Mammary epithelial cell (primary cell): ENCODE measurements at regions of chrX and their contacts with region 1.

Region 1: GRCh38 chrX:45849253-45849862 is 648.7 kb upstream of the DIPK2B start:
- DNase-seq: peak; percentile 84
- H3K4me3 ChIP-seq: peak overlapping the region; percentile 34 to 78 (median 77)
- H3K27ac ChIP-seq: peak overlapping the region; percentile 56
- H3K4me1 ChIP-seq: peaks cover 32% of the 10 kb centered on the region
- H3K27me3 ChIP-seq: no peaks in the 10 kb centered on the region
- CTCF ChIP-seq: peak; percentile 36 to 61

Region 2: DNA sequence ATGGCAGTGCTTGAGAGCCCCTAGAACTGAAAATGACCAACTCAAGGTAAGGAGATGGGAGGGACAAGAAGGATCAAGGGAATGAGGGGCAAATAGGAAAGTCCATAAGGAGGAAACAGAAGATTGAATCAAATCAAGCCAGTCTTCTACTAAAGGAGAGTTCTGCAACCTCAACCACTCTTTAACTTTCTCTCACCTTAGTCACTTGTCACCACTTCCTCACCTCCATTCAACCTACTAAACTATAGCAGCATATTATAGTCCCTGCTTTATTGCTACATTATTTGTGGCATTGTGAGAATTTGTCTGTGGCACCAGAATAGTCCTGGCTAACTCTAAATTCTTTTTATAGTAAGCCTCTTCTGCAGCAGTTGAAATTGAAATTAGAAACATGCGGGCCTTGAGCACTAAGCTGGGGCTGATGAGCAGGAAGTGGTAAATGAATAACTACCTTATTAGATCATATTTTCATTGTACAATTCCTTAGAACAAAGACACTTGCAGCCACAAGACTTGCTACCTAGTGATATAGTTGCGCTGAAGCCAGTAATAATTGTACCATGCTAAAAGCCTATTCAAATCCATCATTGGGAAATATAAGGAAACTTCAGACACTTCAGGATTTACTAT is 359.0 kb after region 1 on chrX:
- CTCF ChIA-PET with region 1: no interaction called
- dilution Hi-C with region 1: no loop called
- in situ Hi-C with region 1: no loop called
- intact Hi-C with region 1: loop called (anchors 2 kb)
- DNase-seq: peak; percentile 65
- H3K4me3 ChIP-seq: no peak overlapping the region
- H3K27ac ChIP-seq: peak overlapping the region; percentile 50
- H3K4me1 ChIP-seq: peaks cover 41% of the 10 kb centered on the region
- H3K27me3 ChIP-seq: no peaks in the 10 kb centered on the region
- CTCF ChIP-seq: no peak

Region 3: DNA sequence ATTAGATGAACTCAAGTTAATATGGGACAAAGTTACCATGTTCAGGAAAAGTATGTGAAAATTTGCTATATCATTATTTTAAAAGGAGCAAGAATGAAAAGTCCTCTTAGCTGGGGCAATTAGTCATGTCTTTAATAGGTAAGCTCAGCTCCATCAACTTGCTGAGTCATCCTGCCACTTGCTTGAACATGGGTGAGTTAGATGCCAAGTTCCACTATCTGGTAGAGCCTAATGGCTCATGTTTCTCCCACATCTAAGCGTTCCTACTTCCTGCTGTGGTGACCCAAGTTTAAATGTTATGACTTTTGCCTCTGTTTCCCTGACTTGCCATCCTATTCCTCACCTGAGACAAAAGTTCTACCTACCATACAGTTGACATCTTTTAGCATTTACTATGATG is 419.1 kb after region 1 on chrX:
- CTCF ChIA-PET with region 1: no interaction called
- dilution Hi-C with region 1: no loop called
- in situ Hi-C with region 1: loop called in 1 of 2 experiments (anchors 25 kb)
- intact Hi-C with region 1: loop called (anchors 5 kb)
- DNase-seq: peak; percentile 85
- H3K4me3 ChIP-seq: no peak overlapping the region
- H3K27ac ChIP-seq: peak overlapping the region; percentile 47
- H3K4me1 ChIP-seq: peaks cover 26% of the 10 kb centered on the region
- H3K27me3 ChIP-seq: no peaks in the 10 kb centered on the region
- CTCF ChIP-seq: no peak

Region 4: GRCh38 chrX:46325312-46325877 is 476.0 kb after region 1 on chrX:
- CTCF ChIA-PET with region 1: no interaction called
- dilution Hi-C with region 1: no loop called
- in situ Hi-C with region 1: no loop called
- intact Hi-C with region 1: loop called (anchors 2 kb)
- DNase-seq: peak; percentile 92
- H3K4me3 ChIP-seq: no peak overlapping the region
- H3K27ac ChIP-seq: peak overlapping the region; percentile 98
- H3K4me1 ChIP-seq: peaks cover 42% of the 10 kb centered on the region
- H3K27me3 ChIP-seq: no peaks in the 10 kb centered on the region
- CTCF ChIP-seq: no peak

Region 5: GRCh38 chrX:46376246-46376885 is 527.0 kb after region 1 on chrX:
- CTCF ChIA-PET with region 1: no interaction called
- dilution Hi-C with region 1: no loop called
- in situ Hi-C with region 1: loop called (anchors 25 kb)
- intact Hi-C with region 1: loop called (anchors 1 kb)
- DNase-seq: peak; percentile 61
- H3K4me3 ChIP-seq: no peak overlapping the region
- H3K27ac ChIP-seq: peak overlapping the region; percentile 7
- H3K4me1 ChIP-seq: peaks cover 20% of the 10 kb centered on the region
- H3K27me3 ChIP-seq: no peaks in the 10 kb centered on the region
- CTCF ChIP-seq: peak; percentile 50 to 61